ENCODE measurements at regions of chr1 and their contacts with region 1.

Region 1: DNA sequence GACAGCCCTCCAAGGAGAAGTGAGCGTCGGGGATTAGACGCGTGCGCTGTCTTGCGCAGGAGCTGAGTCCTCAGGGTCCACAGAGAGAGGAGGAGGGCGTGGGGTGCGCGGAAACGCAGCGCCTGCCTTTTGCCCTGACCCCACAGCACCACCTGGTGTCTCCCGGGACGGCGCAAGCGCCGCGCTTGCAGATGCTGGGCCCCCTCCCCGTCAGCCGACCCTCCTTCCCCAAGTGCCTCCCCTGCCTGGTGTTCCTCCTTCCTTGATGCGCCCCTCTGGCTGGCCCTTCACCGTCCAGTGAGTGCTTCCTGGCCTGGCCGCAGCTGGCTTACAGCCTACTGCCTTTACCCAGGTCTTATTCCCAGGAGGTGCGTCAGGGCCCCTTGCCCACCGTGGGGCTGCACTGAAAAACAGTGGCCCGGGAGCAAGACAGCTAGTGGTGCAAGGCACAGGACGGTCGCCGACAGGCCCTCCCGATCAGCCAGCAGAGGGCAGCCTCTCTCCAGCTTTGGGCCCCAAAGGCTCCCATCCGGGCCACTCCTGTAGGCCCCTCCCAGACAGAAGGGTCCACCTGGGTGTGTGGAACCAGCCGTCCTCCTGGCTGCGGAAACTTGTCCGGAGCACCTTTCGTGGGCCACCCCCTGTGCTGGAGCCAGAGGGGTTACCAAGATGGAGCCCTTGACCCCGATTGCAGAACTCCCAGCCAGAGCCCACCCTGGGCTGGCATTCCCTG is 12.9 kb upstream of the PHLDA3 start:
- DNase-seq: peak; percentile 97
- ATAC-seq: peak; percentile 72
- H3K4me3 Mint-ChIP-seq: peak overlapping the region; percentile 84
- H3K27ac Mint-ChIP-seq: no peak overlapping the region
- H3K4me1 Mint-ChIP-seq: peaks cover 29% of the 10 kb centered on the region
- H3K27me3 Mint-ChIP-seq: peaks cover 4% of the 10 kb centered on the region
- CTCF ChIP-seq: peak; percentile 88

Region 2: DNA sequence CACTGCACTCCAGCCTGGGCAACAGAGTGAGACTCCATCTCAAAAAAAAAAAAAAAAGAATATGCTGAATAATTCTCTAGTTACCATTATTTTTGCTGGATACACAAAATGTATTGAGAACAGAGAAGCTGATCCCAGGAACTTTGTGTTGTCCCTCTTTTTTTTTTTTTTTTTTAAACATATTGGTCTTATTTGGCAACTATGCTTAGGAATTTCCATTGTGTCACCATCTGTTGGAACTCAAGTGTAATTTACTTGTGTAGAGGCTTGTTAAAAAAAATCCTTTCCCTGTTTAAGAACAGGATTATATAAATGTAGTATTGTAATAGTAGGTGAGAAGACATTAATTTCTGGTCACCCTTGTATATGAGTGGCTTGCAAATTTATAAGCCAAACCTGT is 714.6 kb before region 1 on chr1:
- CTCF ChIA-PET with region 1: no interaction called
- POLR2A ChIA-PET with region 1: no interaction called
- DNase-seq: no peak
- ATAC-seq: no peak
- H3K4me3 Mint-ChIP-seq: no peak overlapping the region
- H3K27ac Mint-ChIP-seq: no peak overlapping the region
- H3K4me1 Mint-ChIP-seq: no peaks in the 10 kb centered on the region
- H3K27me3 Mint-ChIP-seq: no peaks in the 10 kb centered on the region
- CTCF ChIP-seq: no peak

Region 3: DNA sequence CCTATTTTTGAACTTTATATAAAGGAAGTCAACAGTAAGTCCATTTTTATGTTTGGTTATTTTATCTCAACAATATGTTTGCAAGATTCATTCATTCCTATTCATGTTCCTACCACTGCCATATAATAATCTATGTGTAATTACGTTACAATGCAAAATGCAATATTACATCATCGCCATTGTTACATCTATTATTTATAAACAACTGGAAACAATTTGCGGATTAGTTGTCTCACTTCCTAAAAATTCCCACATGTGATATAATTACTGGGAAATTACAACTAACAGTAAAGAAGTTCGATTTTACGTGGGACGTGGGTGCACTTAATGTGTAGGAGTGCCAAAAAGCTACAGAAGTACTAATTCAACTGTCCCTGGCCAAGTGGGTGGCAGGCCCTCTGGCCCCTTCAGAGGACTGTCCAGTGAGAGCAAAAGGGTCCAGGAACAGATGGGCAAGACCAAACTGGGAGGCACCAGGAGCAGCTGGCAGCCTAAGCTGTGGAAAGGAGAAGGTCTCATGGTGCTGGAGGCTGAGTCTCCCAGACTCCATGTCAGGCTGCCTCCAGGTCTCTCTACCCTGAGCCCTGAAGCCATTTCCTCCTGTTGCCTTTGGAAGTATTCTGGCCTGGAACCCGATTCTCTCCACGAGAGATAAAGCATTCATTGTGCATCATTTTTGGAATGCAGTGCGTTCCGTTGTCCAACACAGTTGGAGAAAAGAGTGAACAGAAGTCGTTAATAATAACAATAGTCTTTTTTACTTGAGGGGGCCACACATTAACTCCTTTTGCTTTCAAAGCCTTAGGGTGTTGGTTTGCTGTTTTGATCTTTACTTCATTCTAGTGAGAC is 147.4 kb before region 1 on chr1:
- CTCF ChIA-PET with region 1: no interaction called
- POLR2A ChIA-PET with region 1: no interaction called
- DNase-seq: no peak
- ATAC-seq: no peak
- H3K4me3 Mint-ChIP-seq: no peak overlapping the region
- H3K27ac Mint-ChIP-seq: no peak overlapping the region
- H3K4me1 Mint-ChIP-seq: no peaks in the 10 kb centered on the region
- H3K27me3 Mint-ChIP-seq: no peaks in the 10 kb centered on the region
- CTCF ChIP-seq: no peak

Region 4: GRCh38 chr1:201348211-201348566 is 133.7 kb before region 1 on chr1:
- CTCF ChIA-PET with region 1: interaction called, 21 read pairs
- POLR2A ChIA-PET with region 1: no interaction called
- DNase-seq: peak; percentile 81
- ATAC-seq: peak; percentile 87
- H3K4me3 Mint-ChIP-seq: no peak overlapping the region; the same call in 1 of the 2 replicates
- H3K27ac Mint-ChIP-seq: 0 out of 2 replicates have a peak overlapping the region, but pooled peaks have one; percentile 10
- H3K4me1 Mint-ChIP-seq: peaks cover 40% of the 10 kb centered on the region
- H3K27me3 Mint-ChIP-seq: no peaks in the 10 kb centered on the region; the same call in 1 of the 2 replicates
- CTCF ChIP-seq: peak; percentile 74

Region 5: DNA sequence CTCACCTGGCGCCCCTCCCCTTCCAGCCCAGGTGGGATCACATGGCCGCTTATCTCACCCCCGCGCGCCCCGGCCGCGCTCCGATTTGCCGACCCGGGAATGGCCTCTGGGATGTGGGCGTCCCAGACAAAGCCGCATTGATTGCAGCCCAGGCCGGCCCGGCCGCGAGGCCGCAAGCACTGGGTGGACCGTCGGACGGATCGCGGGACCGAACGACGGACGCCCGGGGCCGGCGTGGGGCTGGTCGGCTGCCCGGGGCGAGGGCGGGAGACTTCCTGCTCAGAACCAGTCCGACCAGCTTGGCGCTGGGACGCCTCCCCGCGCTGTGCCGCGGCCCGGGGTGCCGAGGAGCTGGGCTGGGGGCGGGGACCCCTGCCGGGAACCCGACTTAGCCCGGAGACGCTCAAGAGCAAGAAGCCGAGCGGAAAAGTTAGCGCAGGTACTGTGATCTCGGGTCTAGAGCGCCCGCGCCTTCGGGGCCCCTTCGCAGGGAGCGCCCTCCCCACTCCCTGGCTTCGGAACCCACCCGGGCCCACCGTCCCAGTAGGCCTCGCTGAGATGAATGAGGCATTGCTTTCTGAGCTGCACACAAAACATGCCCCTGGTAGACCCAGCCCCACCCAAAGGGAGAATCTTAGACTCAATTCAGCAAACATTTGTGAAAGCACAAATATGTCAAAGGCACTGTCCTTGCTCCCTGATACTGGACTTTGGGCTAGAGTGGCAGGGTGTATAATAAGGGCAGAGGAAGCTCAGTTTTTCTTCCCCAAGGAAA is 82.4 kb before region 1 on chr1:
- CTCF ChIA-PET with region 1: interaction called, 10 read pairs
- POLR2A ChIA-PET with region 1: no interaction called
- DNase-seq: peak; percentile 76
- ATAC-seq: peak; percentile 68
- H3K4me3 Mint-ChIP-seq: peak overlapping the region; percentile 62
- H3K27ac Mint-ChIP-seq: no peak overlapping the region
- H3K4me1 Mint-ChIP-seq: peaks cover 26% of the 10 kb centered on the region
- H3K27me3 Mint-ChIP-seq: peaks cover 8% of the 10 kb centered on the region; the same call in 1 of the 2 replicates
- CTCF ChIP-seq: no peak

Region 6: GRCh38 chr1:201463071-201463552 is 18.8 kb before region 1 on chr1:
- CTCF ChIA-PET with region 1: interaction called, 73 read pairs
- POLR2A ChIA-PET with region 1: interaction called, 12 read pairs
- DNase-seq: no peak
- ATAC-seq: peak; percentile 83
- H3K4me3 Mint-ChIP-seq: no peak overlapping the region
- H3K27ac Mint-ChIP-seq: 0 out of 2 replicates have a peak overlapping the region, but pooled peaks have one; percentile 5
- H3K4me1 Mint-ChIP-seq: peaks cover 26% of the 10 kb centered on the region
- H3K27me3 Mint-ChIP-seq: peaks cover 4% of the 10 kb centered on the region; the same call in 1 of the 2 replicates
- CTCF ChIP-seq: no peak

Region 7: GRCh38 chr1:201506556-201507359 is 24.8 kb after region 1 on chr1 and contains the start of gene CSRP1:
- CTCF ChIA-PET with region 1: interaction called, 390 read pairs
- POLR2A ChIA-PET with region 1: interaction called, 36 read pairs
- DNase-seq: peak; percentile 49
- ATAC-seq: peak; percentile 19
- H3K4me3 Mint-ChIP-seq: peak within 1 kb of the TSS; percentile 67
- H3K27ac Mint-ChIP-seq: no peak within 1 kb of the TSS
- H3K4me1 Mint-ChIP-seq: peaks cover 49% of the 10 kb centered on the region
- H3K27me3 Mint-ChIP-seq: peaks cover 39% of the 10 kb centered on the region
- CTCF ChIP-seq: no peak
- total RNA-seq, gene CSRP1: 10.7 to 15.4 TPM (median 14.3 TPM) in 3 replicates

Region 8: DNA sequence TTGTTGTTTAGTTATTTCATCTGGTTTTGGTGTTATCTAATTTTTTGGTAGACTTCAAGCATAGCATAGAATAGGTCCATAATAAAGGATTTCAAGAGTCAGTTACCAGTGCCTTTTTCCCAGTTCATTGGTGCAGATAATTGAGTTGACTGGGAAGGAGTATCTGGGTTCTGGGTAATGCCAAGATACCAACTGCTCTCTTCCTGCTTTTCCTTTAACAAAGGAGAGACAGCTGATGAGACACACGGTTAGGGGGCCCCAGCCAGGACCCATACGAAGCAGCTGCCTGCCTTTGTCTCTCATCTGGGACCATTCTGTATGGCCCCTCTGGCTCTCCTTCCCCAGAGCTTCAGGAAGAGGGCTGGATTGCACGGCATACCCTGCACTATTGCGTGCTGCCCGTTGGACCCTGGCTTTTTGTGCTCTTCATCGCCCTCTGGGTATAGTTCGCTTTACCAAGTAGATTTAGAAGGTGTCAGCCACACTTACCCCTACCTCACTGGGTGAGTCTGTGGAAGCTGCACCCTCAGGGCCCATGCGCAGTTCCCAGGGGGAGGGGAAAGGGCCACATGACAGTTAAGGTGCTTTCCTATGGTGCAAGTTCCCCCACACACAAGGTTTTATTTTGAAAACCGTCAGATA is 64.0 kb after region 1 on chr1:
- CTCF ChIA-PET with region 1: interaction called, 28 read pairs
- POLR2A ChIA-PET with region 1: no interaction called
- DNase-seq: no peak
- ATAC-seq: peak; percentile 95
- H3K4me3 Mint-ChIP-seq: no peak overlapping the region
- H3K27ac Mint-ChIP-seq: 0 out of 2 replicates have a peak overlapping the region, but pooled peaks have one; percentile 85
- H3K4me1 Mint-ChIP-seq: peaks cover 20% of the 10 kb centered on the region
- H3K27me3 Mint-ChIP-seq: peaks cover 19% of the 10 kb centered on the region
- CTCF ChIP-seq: no peak

Region 9: GRCh38 chr1:201792534-201793305 is 310.8 kb after region 1 on chr1:
- CTCF ChIA-PET with region 1: interaction called, 23 read pairs
- POLR2A ChIA-PET with region 1: no interaction called
- DNase-seq: peak; percentile 85
- ATAC-seq: peak; percentile 96
- H3K4me3 Mint-ChIP-seq: no peak overlapping the region
- H3K27ac Mint-ChIP-seq: no peak overlapping the region
- H3K4me1 Mint-ChIP-seq: no peaks in the 10 kb centered on the region
- H3K27me3 Mint-ChIP-seq: no peaks in the 10 kb centered on the region
- CTCF ChIP-seq: peak; percentile 82

Measured in WTC11 (cell line).